IMR-90 (cell line): ENCODE measurements at regions of chr9 and their contacts with region 1.

Region 1: GRCh38 chr9:96854073-96854876 is at the start of gene ZNF782:
- DNase-seq: peak; percentile 93
- ATAC-seq: peak; percentile 96
- H3K4me3 ChIP-seq: peak within 1 kb of the TSS; percentile 58
- H3K27ac ChIP-seq: peak within 1 kb of the TSS; percentile 31; the same call in 1 of the 2 replicates
- H3K4me1 ChIP-seq: peaks cover 7% of the 10 kb centered on the region
- H3K27me3 ChIP-seq: no peaks in the 10 kb centered on the region
- CTCF ChIP-seq: no peak
- POLR2A ChIP-seq: no peak
- RAD21 ChIP-seq: no peak
- total RNA-seq, gene ZNF782: 3.1 and 4.3 TPM in 2 replicates

Region 2: DNA sequence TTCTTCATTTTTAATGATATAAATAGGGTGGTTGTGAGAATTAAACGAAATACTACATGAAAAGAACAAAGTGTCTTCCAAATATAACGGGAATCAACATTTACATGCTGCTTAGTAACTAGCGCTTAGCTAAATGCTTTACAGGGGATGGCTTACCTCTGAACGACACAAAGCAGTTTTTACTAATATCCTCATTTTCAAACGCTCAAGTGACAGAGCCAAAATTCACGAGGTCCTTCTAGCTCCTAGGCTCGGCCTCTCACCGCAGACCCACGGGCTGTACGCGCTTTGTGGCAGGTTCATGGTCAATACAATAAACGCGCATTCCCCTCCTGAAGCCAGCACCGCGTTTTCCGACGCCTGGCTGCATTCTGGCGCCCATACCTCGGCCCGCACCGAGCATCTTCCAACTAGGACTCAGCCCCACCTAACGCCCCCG is 76.8 kb before region 1 on chr9:
- CTCF ChIA-PET with region 1: no interaction called
- POLR2A ChIA-PET with region 1: no interaction called
- dilution Hi-C with region 1: no loop called
- in situ Hi-C with region 1: no loop called
- intact Hi-C with region 1: loop called (anchors 5 kb)
- DNase-seq: no peak
- ATAC-seq: no peak
- H3K4me3 ChIP-seq: peak overlapping the region; percentile 94
- H3K27ac ChIP-seq: peak overlapping the region; percentile 80
- H3K4me1 ChIP-seq: peaks cover 2% of the 10 kb centered on the region; the same call in 1 of the 2 replicates
- H3K27me3 ChIP-seq: no peaks in the 10 kb centered on the region
- CTCF ChIP-seq: no peak
- POLR2A ChIP-seq: no peak
- RAD21 ChIP-seq: no peak

Region 3: DNA sequence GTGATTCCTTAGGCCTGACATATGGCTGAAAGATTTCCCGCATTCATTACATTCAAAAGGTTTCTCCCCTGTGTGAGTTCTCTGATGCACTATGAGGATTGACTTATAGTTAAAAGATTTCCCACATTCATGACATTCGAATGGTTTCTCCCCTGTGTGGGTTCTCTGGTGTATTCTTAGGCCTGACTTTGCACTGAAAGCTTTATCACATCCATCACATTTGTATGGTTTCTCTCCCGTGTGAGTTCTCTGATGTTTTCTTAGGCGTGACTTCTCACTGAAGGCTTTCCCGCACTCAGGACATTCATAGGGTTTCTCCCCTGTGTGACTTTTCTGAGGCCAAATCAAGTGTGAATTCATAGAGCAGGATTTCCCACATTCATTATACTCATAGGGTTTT is 35.7 kb before region 1 on chr9:
- CTCF ChIA-PET with region 1: no interaction called
- POLR2A ChIA-PET with region 1: no interaction called
- dilution Hi-C with region 1: no loop called
- in situ Hi-C with region 1: no loop called
- intact Hi-C with region 1: no loop called
- DNase-seq: no peak
- ATAC-seq: no peak
- H3K4me3 ChIP-seq: no peak overlapping the region
- H3K27ac ChIP-seq: no peak overlapping the region
- H3K4me1 ChIP-seq: no peaks in the 10 kb centered on the region
- H3K27me3 ChIP-seq: no peaks in the 10 kb centered on the region
- CTCF ChIP-seq: no peak
- POLR2A ChIP-seq: no peak
- RAD21 ChIP-seq: no peak

Region 4: DNA sequence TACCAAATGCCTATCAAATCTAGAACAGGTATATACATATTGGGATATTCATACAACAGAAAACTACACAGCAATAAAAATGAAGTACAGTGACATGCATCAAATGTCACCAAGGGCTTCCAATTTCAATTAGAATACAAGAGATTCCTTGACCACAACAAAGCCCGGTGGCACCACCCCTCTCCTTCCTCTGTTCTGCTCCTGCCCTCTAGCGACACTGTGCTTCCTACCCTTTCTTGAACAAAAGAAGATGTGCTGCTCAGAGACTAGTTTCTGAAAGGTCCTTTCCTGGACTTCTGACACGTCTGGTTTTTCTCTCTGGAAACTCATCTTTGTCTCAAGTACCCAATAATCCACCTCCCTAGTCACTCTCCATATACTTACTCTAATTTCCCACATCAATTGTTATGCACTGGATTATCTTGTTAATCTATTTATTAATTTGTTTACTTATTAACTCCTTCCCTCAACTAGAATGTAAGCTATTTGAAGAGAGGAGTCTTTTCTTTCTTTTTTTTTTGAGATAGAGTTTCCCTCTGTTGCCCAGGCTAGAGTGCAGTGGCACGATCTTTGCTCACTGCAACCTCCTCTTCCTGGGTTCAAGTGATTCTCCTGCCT is 255.0 kb after region 1 on chr9:
- CTCF ChIA-PET with region 1: no interaction called
- POLR2A ChIA-PET with region 1: no interaction called
- dilution Hi-C with region 1: no loop called
- in situ Hi-C with region 1: no loop called
- intact Hi-C with region 1: loop called (anchors 1 kb)
- DNase-seq: peak; percentile 6
- ATAC-seq: peak; percentile 37; the same call in 1 of the 2 replicates
- H3K4me3 ChIP-seq: no peak overlapping the region
- H3K27ac ChIP-seq: no peak overlapping the region
- H3K4me1 ChIP-seq: no peaks in the 10 kb centered on the region
- H3K27me3 ChIP-seq: no peaks in the 10 kb centered on the region
- CTCF ChIP-seq: peak; percentile 31; the same call in 1 of the 2 replicates
- POLR2A ChIP-seq: no peak
- RAD21 ChIP-seq: peak; percentile 32

Region 5: GRCh38 chr9:97188545-97188944 is 334.3 kb after region 1 on chr9:
- CTCF ChIA-PET with region 1: no interaction called
- POLR2A ChIA-PET with region 1: no interaction called
- dilution Hi-C with region 1: no loop called
- in situ Hi-C with region 1: no loop called
- intact Hi-C with region 1: no loop called
- DNase-seq: no peak
- ATAC-seq: no peak
- H3K4me3 ChIP-seq: no peak overlapping the region
- H3K27ac ChIP-seq: no peak overlapping the region
- H3K4me1 ChIP-seq: no peaks in the 10 kb centered on the region
- H3K27me3 ChIP-seq: no peaks in the 10 kb centered on the region
- CTCF ChIP-seq: no peak
- POLR2A ChIP-seq: no peak
- RAD21 ChIP-seq: no peak

Region 6: GRCh38 chr9:97386733-97387503 is 532.6 kb after region 1 on chr9:
- CTCF ChIA-PET with region 1: no interaction called
- POLR2A ChIA-PET with region 1: no interaction called
- dilution Hi-C with region 1: no loop called
- in situ Hi-C with region 1: loop called (anchors 5 kb)
- intact Hi-C with region 1: no loop called
- DNase-seq: peak; percentile 56
- ATAC-seq: peak; percentile 96
- H3K4me3 ChIP-seq: no peak overlapping the region
- H3K27ac ChIP-seq: no peak overlapping the region
- H3K4me1 ChIP-seq: no peaks in the 10 kb centered on the region
- H3K27me3 ChIP-seq: peaks cover 2% of the 10 kb centered on the region; the same call in 1 of the 2 replicates
- CTCF ChIP-seq: peak; percentile 70
- POLR2A ChIP-seq: no peak
- RAD21 ChIP-seq: peak; percentile 47

Region 7: GRCh38 chr9:97398999-97399758 is 544.9 kb after region 1 on chr9:
- CTCF ChIA-PET with region 1: interaction called, 12 read pairs
- POLR2A ChIA-PET with region 1: no interaction called
- dilution Hi-C with region 1: no loop called
- in situ Hi-C with region 1: loop called (anchors 5 kb)
- intact Hi-C with region 1: loop called (anchors 1 kb)
- DNase-seq: peak; percentile 65
- ATAC-seq: peak; percentile 99
- H3K4me3 ChIP-seq: no peak overlapping the region
- H3K27ac ChIP-seq: no peak overlapping the region
- H3K4me1 ChIP-seq: no peaks in the 10 kb centered on the region
- H3K27me3 ChIP-seq: peaks cover 12% of the 10 kb centered on the region
- CTCF ChIP-seq: peak; percentile 81
- POLR2A ChIP-seq: no peak
- RAD21 ChIP-seq: peak; percentile 74